ENCODE measurements at regions of chr10 and their contacts with region 1.

Region 1: DNA sequence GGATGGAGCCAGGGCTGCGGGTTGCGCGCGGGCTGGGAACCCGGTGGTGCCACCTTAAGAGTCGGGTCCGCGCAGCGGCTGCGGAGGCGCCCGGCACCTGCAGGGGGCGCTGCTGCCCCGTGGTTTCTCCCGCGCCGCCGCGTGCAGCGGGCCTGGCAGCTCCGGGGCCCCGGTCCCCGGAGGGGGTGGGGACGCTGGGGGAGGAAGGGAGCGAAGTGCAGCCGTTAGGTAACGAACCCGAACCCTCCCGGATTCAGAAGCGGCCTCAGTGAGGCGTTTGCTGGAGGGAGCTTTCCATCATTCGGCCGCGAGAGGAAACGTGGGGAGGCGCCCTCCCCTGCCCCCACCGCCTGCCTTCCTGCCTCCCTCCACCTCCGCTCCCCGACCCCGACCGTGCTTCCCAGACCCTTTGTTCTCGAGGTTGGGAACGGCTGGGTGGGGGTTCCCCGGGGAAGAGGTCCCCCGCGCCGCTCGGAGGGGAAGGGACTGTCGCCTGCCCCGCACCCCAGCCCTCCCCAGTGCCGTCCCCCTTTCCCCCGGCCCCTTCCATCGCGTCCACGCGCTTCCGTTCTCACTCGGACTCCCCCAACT is 29.6 kb downstream of the SKIDA1 start:
- DNase-seq: peak; percentile 95
- ATAC-seq: peak; percentile 83
- H3K4me3 ChIP-seq: peak overlapping the region; percentile 82 to 95 (median 83)
- H3K27ac ChIP-seq: peak overlapping the region; percentile 98
- H3K4me1 ChIP-seq: peaks cover 38% of the 10 kb centered on the region
- H3K27me3 ChIP-seq: no peaks in the 10 kb centered on the region; a peak in 1 of 5 replicates
- CTCF ChIP-seq: peak; percentile 96
- EP300 ChIP-seq: peak; percentile 86 to 92
- POLR2A ChIP-seq: peak in 1 of 2 experiments; percentile 98; a peak in 2 of 4 replicates
- RAD21 ChIP-seq: peak; percentile 100

Region 2: GRCh38 chr10:21078410-21079329 is 417.2 kb before region 1 on chr10:
- CTCF ChIA-PET with region 1: no interaction called
- POLR2A ChIA-PET with region 1: no interaction called
- in situ Hi-C with region 1: no loop called
- intact Hi-C with region 1: loop called (anchors 10 kb)
- DNase-seq: peak; percentile 61
- ATAC-seq: peak; percentile 96
- H3K4me3 ChIP-seq: no peak overlapping the region
- H3K27ac ChIP-seq: no peak overlapping the region
- H3K4me1 ChIP-seq: no peaks in the 10 kb centered on the region
- H3K27me3 ChIP-seq: no peaks in the 10 kb centered on the region
- CTCF ChIP-seq: peak; percentile 85
- EP300 ChIP-seq: no peak
- POLR2A ChIP-seq: no peak
- RAD21 ChIP-seq: peak; percentile 69; the same call in 1 of the 2 replicates

Region 3: GRCh38 chr10:21516242-21517131 is 20.6 kb after region 1 on chr10:
- CTCF ChIA-PET with region 1: interaction called, 6 read pairs
- POLR2A ChIA-PET with region 1: interaction called, 60 read pairs
- in situ Hi-C with region 1: no loop called
- intact Hi-C with region 1: loop called (anchors 2 kb)
- DNase-seq: no peak
- ATAC-seq: peak; percentile 77
- H3K4me3 ChIP-seq: peak overlapping the region; percentile 77 to 91 (median 80)
- H3K27ac ChIP-seq: peak overlapping the region; percentile 41
- H3K4me1 ChIP-seq: peaks cover 71% of the 10 kb centered on the region
- H3K27me3 ChIP-seq: no peaks in the 10 kb centered on the region; a peak in 1 of 5 replicates
- CTCF ChIP-seq: no peak
- EP300 ChIP-seq: no peak
- POLR2A ChIP-seq: no peak
- RAD21 ChIP-seq: peak; percentile 5

Region 4: DNA sequence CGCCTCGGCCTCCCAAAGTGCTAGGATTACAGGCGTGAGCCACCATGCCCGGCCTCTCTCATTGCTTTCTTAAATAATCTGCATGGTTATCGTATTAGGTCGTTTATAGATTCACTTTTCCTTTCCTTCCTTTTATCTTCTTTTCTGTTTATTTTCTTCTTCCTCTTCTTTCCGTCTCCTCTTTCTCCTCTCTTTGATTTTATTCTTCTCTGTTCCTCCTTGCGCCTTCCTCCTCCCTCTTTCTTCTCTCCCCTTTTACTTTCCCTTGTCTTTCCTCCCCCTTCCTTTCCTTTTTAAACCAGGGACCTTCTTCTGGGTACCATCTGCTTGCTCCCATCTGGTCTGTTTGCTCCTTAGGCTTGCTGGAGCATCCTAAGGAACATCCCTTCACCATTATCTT is 56.8 kb after region 1 on chr10:
- CTCF ChIA-PET with region 1: no interaction called
- POLR2A ChIA-PET with region 1: interaction called, 15 read pairs
- in situ Hi-C with region 1: no loop called
- intact Hi-C with region 1: no loop called
- DNase-seq: no peak
- ATAC-seq: no peak
- H3K4me3 ChIP-seq: no peak overlapping the region
- H3K27ac ChIP-seq: no peak overlapping the region
- H3K4me1 ChIP-seq: peaks cover 40% of the 10 kb centered on the region
- H3K27me3 ChIP-seq: no peaks in the 10 kb centered on the region
- CTCF ChIP-seq: no peak
- EP300 ChIP-seq: no peak
- POLR2A ChIP-seq: no peak
- RAD21 ChIP-seq: no peak

Region 5: GRCh38 chr10:21675157-21675796 is 179.4 kb after region 1 on chr10:
- CTCF ChIA-PET with region 1: interaction called, 5 read pairs
- POLR2A ChIA-PET with region 1: interaction called, 6 read pairs
- in situ Hi-C with region 1: no loop called
- intact Hi-C with region 1: loop called (anchors 1 kb)
- DNase-seq: peak; percentile 64
- ATAC-seq: peak; percentile 91
- H3K4me3 ChIP-seq: no peak overlapping the region
- H3K27ac ChIP-seq: no peak overlapping the region
- H3K4me1 ChIP-seq: peaks cover 21% of the 10 kb centered on the region
- H3K27me3 ChIP-seq: no peaks in the 10 kb centered on the region
- CTCF ChIP-seq: peak; percentile 73
- EP300 ChIP-seq: no peak
- POLR2A ChIP-seq: no peak
- RAD21 ChIP-seq: peak; percentile 41; the same call in 1 of the 2 replicates

Region 6: GRCh38 chr10:21764466-21765189 is 268.8 kb after region 1 on chr10:
- CTCF ChIA-PET with region 1: no interaction called
- POLR2A ChIA-PET with region 1: no interaction called
- in situ Hi-C with region 1: no loop called
- intact Hi-C with region 1: no loop called
- DNase-seq: no peak
- ATAC-seq: no peak
- H3K4me3 ChIP-seq: no peak overlapping the region
- H3K27ac ChIP-seq: no peak overlapping the region
- H3K4me1 ChIP-seq: no peaks in the 10 kb centered on the region
- H3K27me3 ChIP-seq: no peaks in the 10 kb centered on the region
- CTCF ChIP-seq: no peak
- EP300 ChIP-seq: no peak
- POLR2A ChIP-seq: no peak
- RAD21 ChIP-seq: no peak

Region 7: GRCh38 chr10:21953585-21954057 is 457.8 kb after region 1 on chr10:
- CTCF ChIA-PET with region 1: no interaction called
- POLR2A ChIA-PET with region 1: interaction called, 3 read pairs
- in situ Hi-C with region 1: loop called (anchors 10 kb)
- intact Hi-C with region 1: loop called (anchors 5 kb)
- DNase-seq: peak; percentile 36
- ATAC-seq: no peak; the same call in 2 of the 3 replicates
- H3K4me3 ChIP-seq: no peak overlapping the region
- H3K27ac ChIP-seq: no peak overlapping the region
- H3K4me1 ChIP-seq: no peaks in the 10 kb centered on the region
- H3K27me3 ChIP-seq: no peaks in the 10 kb centered on the region
- CTCF ChIP-seq: peak; percentile 35; the same call in 1 of the 2 replicates
- EP300 ChIP-seq: no peak
- POLR2A ChIP-seq: no peak
- RAD21 ChIP-seq: no peak

Measured in HepG2 (cell line).